ENCODE measurements at regions of chr1 and their contacts with region 1.

Region 1: GRCh38 chr1:55215256-55216021 is at the start of gene USP24:
- DNase-seq: peak; percentile 55 to 95 (median 66)

Region 2: GRCh38 chr1:55140546-55140983 is 74.9 kb before region 1 on chr1:
- intact Hi-C with region 1: loop called (anchors 5 kb)
- DNase-seq: peak in 6 of 10 donors; percentile 37 to 87 (median 56)

Region 3: GRCh38 chr1:55233145-55233777 is 17.8 kb after region 1 on chr1:
- intact Hi-C with region 1: no loop called
- DNase-seq: no peak